HepG2 (cell line): ENCODE measurements at regions of chr3 and their contacts with region 1.

Region 1: GRCh38 chr3:185983495-185984141 is 45.8 kb upstream of the TRA2B start:
- DNase-seq: peak; percentile 65
- ATAC-seq: peak; percentile 91
- H3K4me3 ChIP-seq: no peak overlapping the region
- H3K27ac ChIP-seq: no peak overlapping the region
- H3K4me1 ChIP-seq: peaks cover 41% of the 10 kb centered on the region
- H3K27me3 ChIP-seq: no peaks in the 10 kb centered on the region
- CTCF ChIP-seq: peak; percentile 90
- EP300 ChIP-seq: no peak
- POLR2A ChIP-seq: no peak
- RAD21 ChIP-seq: peak; percentile 89

Region 2: GRCh38 chr3:185950718-185951117 is 32.9 kb before region 1 on chr3:
- CTCF ChIA-PET with region 1: no interaction called
- POLR2A ChIA-PET with region 1: no interaction called
- in situ Hi-C with region 1: no loop called
- intact Hi-C with region 1: no loop called
- DNase-seq: no peak
- ATAC-seq: no peak
- H3K4me3 ChIP-seq: no peak overlapping the region
- H3K27ac ChIP-seq: no peak overlapping the region
- H3K4me1 ChIP-seq: peaks cover 51% of the 10 kb centered on the region
- H3K27me3 ChIP-seq: no peaks in the 10 kb centered on the region
- CTCF ChIP-seq: no peak
- EP300 ChIP-seq: no peak
- POLR2A ChIP-seq: no peak
- RAD21 ChIP-seq: no peak

Region 3: DNA sequence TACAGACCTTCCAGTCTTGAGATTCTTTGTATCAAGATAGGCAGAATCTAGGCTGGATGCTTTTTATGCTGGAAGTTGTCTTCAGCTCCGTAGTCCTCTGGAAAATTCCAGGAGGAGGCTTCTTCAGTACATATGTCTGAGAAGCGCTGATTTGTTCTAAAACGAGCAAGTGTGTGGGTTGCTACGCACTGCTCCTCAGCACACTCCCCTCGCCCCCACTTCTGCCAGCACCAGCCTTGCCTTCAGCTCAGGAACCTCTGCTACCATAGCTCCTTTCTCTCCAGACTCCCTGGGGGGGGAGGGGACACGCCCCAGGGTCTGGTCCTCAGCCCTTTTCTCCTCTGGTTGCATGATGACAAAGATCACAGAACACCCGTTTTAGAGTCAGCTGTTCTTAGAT is 29.7 kb after region 1 on chr3:
- CTCF ChIA-PET with region 1: no interaction called
- POLR2A ChIA-PET with region 1: no interaction called
- in situ Hi-C with region 1: no loop called
- intact Hi-C with region 1: no loop called
- DNase-seq: no peak
- ATAC-seq: no peak
- H3K4me3 ChIP-seq: no peak overlapping the region
- H3K27ac ChIP-seq: no peak overlapping the region
- H3K4me1 ChIP-seq: peaks cover 13% of the 10 kb centered on the region; the same call in 1 of the 2 replicates
- H3K27me3 ChIP-seq: peaks cover 2 to 3% of the 10 kb centered on the region in 2 experiments; a peak in 3 of 5 replicates
- CTCF ChIP-seq: no peak
- EP300 ChIP-seq: no peak
- POLR2A ChIP-seq: no peak
- RAD21 ChIP-seq: no peak

Region 4: GRCh38 chr3:186025161-186025560 is 41.5 kb after region 1 on chr3:
- CTCF ChIA-PET with region 1: no interaction called
- POLR2A ChIA-PET with region 1: no interaction called
- in situ Hi-C with region 1: no loop called
- intact Hi-C with region 1: no loop called
- DNase-seq: no peak
- ATAC-seq: no peak
- H3K4me3 ChIP-seq: no peak overlapping the region
- H3K27ac ChIP-seq: no peak overlapping the region
- H3K4me1 ChIP-seq: no peaks in the 10 kb centered on the region
- H3K27me3 ChIP-seq: peaks cover 0 to 7% of the 10 kb centered on the region in 2 experiments; a peak in 2 of 5 replicates
- CTCF ChIP-seq: no peak
- EP300 ChIP-seq: no peak
- POLR2A ChIP-seq: no peak
- RAD21 ChIP-seq: no peak

Region 5: DNA sequence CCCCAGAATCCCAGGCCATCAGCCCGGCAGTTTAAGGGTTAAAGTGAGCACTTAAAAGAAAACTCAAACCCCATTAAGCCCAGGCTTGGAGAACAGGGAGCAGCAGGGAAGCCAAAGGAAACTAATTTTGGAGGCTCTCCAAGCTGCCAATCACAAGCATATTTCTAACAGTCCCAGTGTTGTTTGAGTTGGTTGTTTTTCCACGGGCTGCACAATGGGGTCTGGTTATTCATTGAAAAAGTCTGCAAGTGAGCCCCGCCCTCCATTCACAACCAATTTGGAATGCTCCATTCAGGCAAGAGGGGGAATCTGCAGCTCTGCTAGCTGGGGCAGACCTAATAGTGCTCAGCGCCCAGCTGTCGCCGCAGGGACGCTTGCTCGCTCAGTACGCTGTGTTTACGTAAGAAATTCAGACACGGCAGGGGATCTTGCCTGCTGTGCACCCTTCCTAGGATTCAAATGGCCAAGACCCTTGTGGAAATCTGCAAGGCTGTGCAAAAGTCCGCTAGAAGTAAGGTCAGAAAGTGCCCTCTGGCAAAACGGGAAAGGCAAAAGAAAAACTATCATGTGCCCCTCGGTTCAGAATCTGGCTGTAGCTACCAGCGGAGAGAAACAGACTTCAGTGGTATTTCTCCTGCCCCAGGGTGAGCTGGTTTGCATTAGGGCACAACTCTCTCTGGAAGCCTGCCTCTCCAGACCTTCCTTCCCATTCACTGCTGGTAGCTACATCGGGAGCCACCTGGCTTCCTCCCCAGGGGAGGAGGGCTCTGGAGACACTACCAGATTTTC is 114.2 kb after region 1 on chr3:
- CTCF ChIA-PET with region 1: no interaction called
- POLR2A ChIA-PET with region 1: interaction called, 3 read pairs
- in situ Hi-C with region 1: no loop called
- intact Hi-C with region 1: loop called (anchors 10 kb)
- DNase-seq: peak; percentile 99
- ATAC-seq: peak; percentile 90
- H3K4me3 ChIP-seq: peak overlapping the region; percentile 44 to 69 (median 58)
- H3K27ac ChIP-seq: peak overlapping the region; percentile 85
- H3K4me1 ChIP-seq: peaks cover 88% of the 10 kb centered on the region
- H3K27me3 ChIP-seq: no peaks in the 10 kb centered on the region
- CTCF ChIP-seq: no peak
- EP300 ChIP-seq: peak; percentile 30 to 80; a peak in 2 of 4 replicates
- POLR2A ChIP-seq: peak; percentile 78 to 83
- RAD21 ChIP-seq: 0 out of 2 replicates have a peak, but pooled peaks have one; percentile 13

Region 6: DNA sequence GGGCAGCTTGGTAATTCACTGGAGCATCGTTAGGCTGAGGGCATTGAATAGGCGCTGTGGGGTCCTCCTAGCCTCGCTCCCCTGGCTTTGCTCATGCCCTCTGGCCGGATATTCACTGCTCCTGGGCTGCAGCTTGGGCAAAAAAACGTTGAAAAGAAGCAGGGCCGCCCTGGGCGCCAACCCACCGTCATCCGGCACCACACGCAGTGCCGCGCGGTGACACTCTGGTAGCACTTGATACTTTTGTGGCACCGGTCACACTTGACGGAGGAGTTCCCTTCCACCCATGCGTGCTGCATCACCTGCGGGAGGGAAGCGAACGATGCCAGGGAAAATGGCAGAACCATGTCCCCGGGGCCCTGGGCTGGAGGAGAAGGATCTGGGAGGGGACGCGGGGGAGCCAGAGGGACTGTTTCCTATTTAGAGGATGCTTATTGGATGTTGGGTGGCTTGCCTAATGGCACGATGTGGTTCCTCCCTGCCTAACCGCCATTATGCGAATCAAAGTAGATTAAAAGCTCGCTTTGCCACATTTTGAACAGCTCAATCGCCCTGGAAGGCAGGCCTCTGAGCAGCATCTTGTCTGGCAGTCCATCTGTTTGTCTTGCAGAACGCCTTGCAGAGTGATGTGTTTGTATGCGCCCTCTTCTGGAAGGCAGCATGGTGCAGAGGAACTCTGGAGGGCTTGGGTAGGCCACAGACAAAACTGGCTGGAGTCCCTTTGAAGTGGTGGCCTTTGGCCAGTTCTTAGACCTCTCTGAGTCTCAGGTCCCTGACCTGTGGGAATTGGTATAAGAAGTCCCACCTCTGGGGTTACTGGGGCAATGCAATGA is 285.2 kb after region 1 on chr3:
- CTCF ChIA-PET with region 1: interaction called, 13 read pairs
- POLR2A ChIA-PET with region 1: no interaction called
- in situ Hi-C with region 1: no loop called
- intact Hi-C with region 1: no loop called
- DNase-seq: peak; percentile 34
- ATAC-seq: peak; percentile 89
- H3K4me3 ChIP-seq: no peak overlapping the region
- H3K27ac ChIP-seq: no peak overlapping the region
- H3K4me1 ChIP-seq: peaks cover 24% of the 10 kb centered on the region
- H3K27me3 ChIP-seq: no peaks in the 10 kb centered on the region
- CTCF ChIP-seq: peak; percentile 67
- EP300 ChIP-seq: no peak
- POLR2A ChIP-seq: no peak
- RAD21 ChIP-seq: no peak